Tibial artery (tissue), 4 donors: ENCODE measurements at regions of chr1 and their contacts with region 1.

Region 1: GRCh38 chr1:103191327-103191726 is 83.0 kb upstream of the COL11A1 start:
- DNase-seq: no peak
- H3K4me3 ChIP-seq: no peak overlapping the region
- H3K27ac ChIP-seq: no peak overlapping the region
- H3K4me1 ChIP-seq: no peaks in the 10 kb centered on the region
- H3K27me3 ChIP-seq: no peaks in the 10 kb centered on the region
- CTCF ChIP-seq: no peak

Region 2: DNA sequence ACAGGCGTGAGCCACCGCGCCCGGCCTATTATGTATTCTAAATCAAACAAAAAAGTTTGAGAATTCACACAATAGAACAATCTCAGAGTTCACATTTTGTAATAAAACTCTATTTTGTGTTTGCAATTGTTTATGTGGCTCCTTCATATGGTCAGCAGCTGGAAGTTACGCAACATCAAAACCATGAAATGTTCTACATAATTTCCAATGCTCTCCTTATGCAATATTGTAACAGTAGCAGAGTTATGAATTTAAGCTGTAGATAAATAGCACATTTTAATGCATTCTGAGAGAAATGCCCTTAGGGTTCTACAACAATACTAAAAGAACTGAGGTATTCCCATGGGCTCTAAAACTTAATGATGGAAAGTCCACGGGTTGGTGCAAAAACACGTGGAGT is 20.7 kb before region 1 on chr1:
- intact Hi-C with region 1: no loop called
- DNase-seq: no peak
- H3K4me3 ChIP-seq: no peak overlapping the region
- H3K27ac ChIP-seq: no peak overlapping the region
- H3K4me1 ChIP-seq: no peaks in the 10 kb centered on the region
- H3K27me3 ChIP-seq: no peaks in the 10 kb centered on the region
- CTCF ChIP-seq: no peak

Region 3: GRCh38 chr1:103211073-103211472 is 19.7 kb after region 1 on chr1:
- intact Hi-C with region 1: loop called (anchors 2 kb)
- DNase-seq: no peak
- H3K4me3 ChIP-seq: no peak overlapping the region
- H3K27ac ChIP-seq: no peak overlapping the region
- H3K4me1 ChIP-seq: no peaks in the 10 kb centered on the region
- H3K27me3 ChIP-seq: no peaks in the 10 kb centered on the region
- CTCF ChIP-seq: no peak